Adrenal gland (tissue), 19 donors: ENCODE measurements at regions of chr15 and their contacts with region 1.

Region 1: GRCh38 chr15:86915811-86916331 is 836.2 kb downstream of the AGBL1 start:
- DNase-seq: peak; percentile 25 to 76 (median 50)
- H3K4me3 ChIP-seq: no peak overlapping the region
- H3K27ac ChIP-seq: no peak overlapping the region
- H3K4me1 ChIP-seq: peaks cover 0 to 16% of the 10 kb centered on the region in 2 donors
- H3K27me3 ChIP-seq: no peaks in the 10 kb centered on the region
- CTCF ChIP-seq: peak; percentile 5 to 59 (median 47)
- POLR2A ChIP-seq: no peak

Region 2: GRCh38 chr15:87604857-87605446 is 689.1 kb after region 1 on chr15:
- intact Hi-C with region 1: loop called in 1 of 2 experiments (anchors 5 kb)
- DNase-seq: peak in 2 of 7 donors; percentile 26 to 28
- H3K4me3 ChIP-seq: no peak overlapping the region
- H3K27ac ChIP-seq: no peak overlapping the region
- H3K4me1 ChIP-seq: no peaks in the 10 kb centered on the region
- H3K27me3 ChIP-seq: no peaks in the 10 kb centered on the region
- CTCF ChIP-seq: peak; percentile 30 to 54 (median 43)
- POLR2A ChIP-seq: no peak

Region 3: GRCh38 chr15:88246666-88247446 is 1331.0 kb after region 1 on chr15:
- intact Hi-C with region 1: loop called in 1 of 2 experiments (anchors 10 kb)
- DNase-seq: peak; percentile 64 to 89 (median 74)
- H3K4me3 ChIP-seq: no peak overlapping the region
- H3K27ac ChIP-seq: no peak overlapping the region
- H3K4me1 ChIP-seq: peaks cover 0 to 10% of the 10 kb centered on the region in 2 donors
- H3K27me3 ChIP-seq: peaks cover 8% of the 10 kb centered on the region
- CTCF ChIP-seq: peak; percentile 79 to 99 (median 90)
- POLR2A ChIP-seq: no peak

Region 4: GRCh38 chr15:88274553-88275460 is 1358.9 kb after region 1 on chr15:
- intact Hi-C with region 1: loop called in 1 of 2 experiments (anchors 10 kb)
- DNase-seq: peak; percentile 58 to 78 (median 62)
- H3K4me3 ChIP-seq: no peak overlapping the region
- H3K27ac ChIP-seq: no peak overlapping the region
- H3K4me1 ChIP-seq: no peaks in the 10 kb centered on the region
- H3K27me3 ChIP-seq: peaks cover 6% of the 10 kb centered on the region
- CTCF ChIP-seq: peak; percentile 57 to 83 (median 71)
- POLR2A ChIP-seq: no peak